Heart left ventricle (tissue), 16 donors: ENCODE measurements at regions of chr13 and their contacts with region 1.

Region 1: GRCh38 chr13:97432917-97433726 is 847 bp upstream of the RAP2A start:
- DNase-seq: peak; percentile 99
- ATAC-seq: peak; percentile 92 to 96 (median 95)
- H3K4me3 ChIP-seq: peak overlapping the region; percentile 72 to 92 (median 87)
- H3K27ac ChIP-seq: peak overlapping the region; percentile 96 to 100 (median 99)
- H3K4me1 ChIP-seq: peaks cover 0 to 43% (median 28%) of the 10 kb centered on the region in 12 donors
- H3K27me3 ChIP-seq: no peaks in the 10 kb centered on the region
- CTCF ChIP-seq: no peak
- POLR2A ChIP-seq: peak in 1 of 2 donors; percentile 30

Region 2: DNA sequence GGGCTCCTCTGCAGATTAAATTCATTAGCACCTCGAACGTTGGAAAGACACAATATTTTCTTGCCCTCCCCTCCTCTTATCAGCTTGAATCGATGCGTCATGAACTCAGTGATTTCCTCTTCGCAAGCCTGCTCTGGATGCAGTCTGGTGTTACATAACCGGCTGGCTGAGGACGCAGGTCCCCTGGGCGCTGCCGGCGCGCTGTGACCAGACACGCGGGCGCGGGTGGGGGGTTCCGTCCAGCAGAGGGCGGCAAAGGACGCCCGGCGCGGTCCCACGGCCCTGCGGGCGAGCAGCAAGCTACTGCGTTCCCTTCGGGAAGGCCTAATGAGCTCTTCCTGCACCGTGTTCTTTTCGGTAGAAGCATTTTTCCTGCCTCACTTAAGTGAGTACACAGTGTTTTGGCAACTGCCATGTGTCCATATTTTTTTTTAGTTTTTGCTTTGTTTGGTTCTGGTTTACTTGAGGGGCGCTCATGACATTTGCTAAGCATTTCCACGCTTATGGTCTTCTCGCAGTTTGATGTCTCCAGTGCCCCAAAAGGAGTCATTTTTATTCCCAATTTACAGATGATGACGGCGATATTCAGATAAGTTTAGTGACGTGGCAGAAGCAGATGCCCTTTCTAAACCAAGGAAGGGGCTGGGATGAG is 323.2 kb before region 1 on chr13:
- intact Hi-C with region 1: loop called in 3 of 10 experiments (anchors 5 to 10 kb)
- DNase-seq: peak; percentile 90 to 96 (median 93)
- ATAC-seq: peak; percentile 95 to 98 (median 98)
- H3K4me3 ChIP-seq: peak overlapping the region in 8 of 12 donors; percentile 15 to 52 (median 20)
- H3K27ac ChIP-seq: peak overlapping the region in 6 of 12 donors; percentile 9 to 77 (median 46)
- H3K4me1 ChIP-seq: peaks cover 0 to 31% (median 22%) of the 10 kb centered on the region in 12 donors
- H3K27me3 ChIP-seq: peaks cover 0 to 10% (median 0%) of the 10 kb centered on the region in 9 donors
- CTCF ChIP-seq: peak; percentile 96 to 100 (median 98)
- POLR2A ChIP-seq: no peak

Region 3: GRCh38 chr13:97242755-97243497 is 190.2 kb before region 1 on chr13:
- intact Hi-C with region 1: loop called in 1 of 10 experiments (anchors 10 kb)
- DNase-seq: peak in 2 of 5 donors; percentile 39 to 42
- ATAC-seq: peak in 3 of 4 donors; percentile 19 to 57 (median 40)
- H3K4me3 ChIP-seq: no peak overlapping the region
- H3K27ac ChIP-seq: peak overlapping the region; percentile 37 to 84 (median 74)
- H3K4me1 ChIP-seq: peaks cover 12 to 100% (median 90%) of the 10 kb centered on the region in 12 donors
- H3K27me3 ChIP-seq: no peaks in the 10 kb centered on the region
- CTCF ChIP-seq: no peak
- POLR2A ChIP-seq: no peak

Region 4: GRCh38 chr13:97468331-97468730 is 35.2 kb after region 1 on chr13:
- intact Hi-C with region 1: no loop called
- DNase-seq: no peak
- ATAC-seq: no peak
- H3K4me3 ChIP-seq: no peak overlapping the region
- H3K27ac ChIP-seq: no peak overlapping the region
- H3K4me1 ChIP-seq: peaks cover 0 to 22% (median 5%) of the 10 kb centered on the region in 12 donors
- H3K27me3 ChIP-seq: no peaks in the 10 kb centered on the region
- CTCF ChIP-seq: no peak
- POLR2A ChIP-seq: no peak

Region 5: DNA sequence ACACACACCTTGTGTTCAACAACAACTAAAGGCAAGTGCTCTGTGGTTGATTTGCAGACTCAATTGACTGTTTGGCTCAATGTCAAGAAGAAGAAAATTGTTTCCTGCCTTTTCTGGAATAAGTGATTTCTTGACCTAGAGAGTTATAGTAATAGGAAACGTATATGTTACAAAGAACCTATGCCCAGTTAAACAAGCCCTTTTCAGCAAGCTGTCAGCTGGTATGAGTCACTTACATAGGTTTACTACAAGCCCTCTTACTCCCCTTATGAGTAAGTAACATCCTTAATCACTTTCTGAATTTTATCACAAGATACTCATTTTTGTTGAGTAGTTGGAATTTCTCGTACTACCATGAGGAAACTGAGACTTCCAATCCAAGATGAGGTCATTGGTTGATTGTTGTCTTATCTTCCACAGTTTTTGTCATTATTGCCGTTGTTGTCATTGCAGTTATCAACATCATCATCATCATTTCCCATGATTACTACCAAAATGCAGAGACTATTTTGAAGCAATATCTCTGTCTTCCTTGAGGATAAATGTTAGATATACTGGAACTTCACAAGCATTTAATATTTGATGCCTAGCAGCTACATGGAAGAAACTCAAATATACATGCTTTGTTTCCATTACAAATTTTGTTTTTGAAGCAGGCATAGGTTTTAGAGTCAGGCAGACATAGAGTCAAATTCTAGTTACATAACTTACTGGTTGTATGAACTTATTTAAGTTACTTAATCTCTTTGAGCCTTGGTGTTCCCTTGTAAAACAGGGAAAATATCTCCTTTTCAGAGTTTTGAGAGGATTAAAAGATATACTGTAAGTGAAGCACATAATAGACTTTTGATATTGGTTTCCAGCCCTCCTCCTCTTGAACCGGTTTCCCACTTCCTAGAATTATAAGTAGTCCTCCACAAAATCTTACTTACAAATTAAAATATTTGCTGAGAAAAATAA is 106.8 kb after region 1 on chr13:
- intact Hi-C with region 1: loop called in 1 of 10 experiments (anchors 10 kb)
- DNase-seq: no peak
- ATAC-seq: no peak
- H3K4me3 ChIP-seq: no peak overlapping the region
- H3K27ac ChIP-seq: peak overlapping the region in 5 of 12 donors; percentile 2 to 36 (median 14)
- H3K4me1 ChIP-seq: peaks cover 0 to 25% (median 16%) of the 10 kb centered on the region in 12 donors
- H3K27me3 ChIP-seq: no peaks in the 10 kb centered on the region
- CTCF ChIP-seq: no peak
- POLR2A ChIP-seq: no peak

Region 6: DNA sequence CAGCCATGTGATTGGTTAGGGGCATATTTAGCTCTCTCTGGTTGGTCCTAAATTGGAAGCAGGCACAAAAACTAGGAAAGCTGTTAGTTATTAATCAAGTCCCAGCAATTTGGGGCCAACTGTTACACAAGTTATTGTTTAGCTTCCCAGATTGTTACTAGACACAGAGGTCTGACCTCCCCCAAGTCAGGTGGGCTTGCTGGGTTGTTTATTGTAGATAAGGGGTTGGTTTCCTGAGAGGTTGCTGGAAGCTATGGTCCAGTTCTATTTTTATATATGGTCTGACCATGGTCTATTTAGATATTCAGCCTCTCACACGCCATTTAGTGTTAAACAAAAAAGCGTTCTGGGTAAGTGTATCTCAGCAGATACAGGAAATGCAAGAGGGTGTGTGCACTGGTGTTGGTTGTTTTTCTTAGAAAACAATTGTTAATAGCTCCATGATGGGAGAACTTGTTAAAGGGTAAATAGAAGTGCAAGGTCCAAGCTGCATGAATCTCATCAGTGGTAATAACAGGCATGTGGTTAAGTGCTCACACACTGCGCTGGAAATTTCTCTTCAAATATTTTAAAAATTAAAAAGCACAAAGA is 150.9 kb after region 1 on chr13:
- intact Hi-C with region 1: no loop called
- DNase-seq: no peak
- ATAC-seq: no peak
- H3K4me3 ChIP-seq: no peak overlapping the region
- H3K27ac ChIP-seq: no peak overlapping the region
- H3K4me1 ChIP-seq: peaks cover 0 to 3% (median 0%) of the 10 kb centered on the region in 12 donors
- H3K27me3 ChIP-seq: no peaks in the 10 kb centered on the region
- CTCF ChIP-seq: no peak
- POLR2A ChIP-seq: no peak

Region 7: GRCh38 chr13:97659602-97660001 is 226.5 kb after region 1 on chr13:
- intact Hi-C with region 1: loop called in 2 of 10 experiments (anchors 5 to 10 kb)
- DNase-seq: peak in 1 of 5 donors; percentile 11
- ATAC-seq: peak in 3 of 4 donors; percentile 50 to 62 (median 52)
- H3K4me3 ChIP-seq: no peak overlapping the region
- H3K27ac ChIP-seq: no peak overlapping the region
- H3K4me1 ChIP-seq: peaks cover 0 to 13% (median 0%) of the 10 kb centered on the region in 12 donors
- H3K27me3 ChIP-seq: no peaks in the 10 kb centered on the region
- CTCF ChIP-seq: peak; percentile 20 to 60 (median 44)
- POLR2A ChIP-seq: no peak